ENCODE measurements at regions of chr13 and their contacts with region 1.

Region 1: GRCh38 chr13:46679369-46680120 is 117.4 kb downstream of the ESD start:
- DNase-seq: peak; percentile 75 to 95 (median 92)
- H3K4me3 ChIP-seq: peak overlapping the region in 6 of 7 experiments; percentile 25 to 75 (median 48)
- H3K27ac ChIP-seq: peak overlapping the region; percentile 28 to 75
- H3K4me1 ChIP-seq: peaks cover 22 to 40% (median 29%) of the 10 kb centered on the region in 4 experiments
- H3K27me3 ChIP-seq: no peaks in the 10 kb centered on the region

Region 2: DNA sequence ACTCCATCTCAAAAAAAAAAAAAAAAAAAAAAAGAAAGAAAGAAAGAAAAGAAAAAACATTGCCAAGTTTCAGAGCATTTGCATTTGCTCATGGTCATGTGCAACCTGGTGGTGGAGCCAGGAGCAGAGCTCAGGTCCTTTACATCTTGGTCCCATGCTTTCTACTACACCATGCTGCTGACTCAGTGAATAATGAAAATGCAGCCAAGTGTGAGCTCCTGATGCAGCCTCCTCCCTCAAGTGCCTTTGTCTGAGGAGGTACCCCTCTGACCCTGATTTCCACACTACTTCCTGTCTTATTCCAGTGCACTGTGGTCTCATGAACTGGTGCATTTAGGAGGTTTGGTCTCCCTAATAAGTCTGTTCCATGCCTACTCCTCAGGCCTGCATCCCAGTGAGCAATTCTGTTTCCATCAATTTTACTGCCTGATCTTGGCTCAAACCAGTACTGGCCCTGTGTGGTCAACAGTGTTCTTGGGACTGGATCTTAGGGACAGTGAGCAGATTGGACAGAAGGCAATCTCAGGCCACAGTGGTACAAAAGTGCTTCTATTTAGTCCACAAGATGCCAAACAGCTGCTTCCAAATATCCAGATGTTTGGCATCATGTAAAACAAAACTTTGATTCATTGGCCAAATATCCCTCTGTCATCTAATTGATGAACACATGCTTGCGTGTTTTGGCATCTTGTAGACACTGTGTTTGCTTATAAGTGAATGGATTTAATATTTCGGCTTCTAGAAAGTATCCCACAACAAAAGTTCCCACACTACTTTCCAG is 155.4 kb before region 1 on chr13:
- CTCF ChIA-PET with region 1: no interaction called
- POLR2A ChIA-PET with region 1: no interaction called
- DNase-seq: no peak
- H3K4me3 ChIP-seq: no peak overlapping the region
- H3K27ac ChIP-seq: no peak overlapping the region
- H3K4me1 ChIP-seq: peaks cover 2 to 10% (median 7%) of the 10 kb centered on the region in 4 experiments
- H3K27me3 ChIP-seq: no peaks in the 10 kb centered on the region

Region 3: DNA sequence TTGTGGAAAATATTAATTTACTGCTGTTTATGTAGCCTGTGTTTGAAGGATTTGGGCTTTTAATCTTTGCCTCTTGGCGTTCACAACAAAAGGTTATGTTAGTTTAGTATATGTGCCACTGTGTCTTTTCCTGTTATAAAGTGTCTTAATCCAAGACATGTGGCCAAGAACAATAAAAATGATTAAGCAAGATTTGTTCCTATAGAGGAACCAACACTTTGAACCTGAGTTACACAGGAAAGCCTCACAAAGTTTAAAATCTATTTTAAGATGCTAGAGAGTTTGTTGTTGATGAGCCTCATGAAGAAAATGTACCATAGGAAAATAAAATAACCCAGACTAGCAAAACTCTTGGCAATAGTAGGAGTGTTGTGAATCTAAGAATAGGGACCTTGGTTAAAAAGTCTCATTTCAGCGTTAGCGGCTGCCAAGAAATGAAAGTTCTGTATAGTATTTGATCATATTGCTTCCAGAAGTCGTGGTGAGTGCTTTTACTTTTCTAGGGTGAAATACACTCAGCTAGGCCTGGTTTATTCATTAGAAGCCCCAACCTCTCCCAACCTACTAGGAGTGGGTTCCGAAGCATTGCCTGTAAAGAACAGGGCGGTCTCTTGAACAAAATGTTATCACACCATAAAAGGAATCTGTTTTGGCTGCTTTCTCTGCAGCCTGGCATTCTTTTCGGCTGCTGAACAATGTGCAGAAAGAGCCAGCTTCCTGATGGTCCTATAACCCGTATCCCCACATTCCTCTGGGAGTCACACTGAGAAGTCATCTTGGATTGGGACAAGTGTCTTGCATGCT is 24.0 kb before region 1 on chr13:
- CTCF ChIA-PET with region 1: no interaction called
- POLR2A ChIA-PET with region 1: no interaction called
- DNase-seq: peak in 1 of 3 donors; percentile 60
- H3K4me3 ChIP-seq: peak overlapping the region in 4 of 7 experiments; percentile 31 to 63 (median 50)
- H3K27ac ChIP-seq: peak overlapping the region; percentile 48 to 83
- H3K4me1 ChIP-seq: peaks cover 0 to 34% (median 20%) of the 10 kb centered on the region in 4 experiments
- H3K27me3 ChIP-seq: no peaks in the 10 kb centered on the region

Region 4: DNA sequence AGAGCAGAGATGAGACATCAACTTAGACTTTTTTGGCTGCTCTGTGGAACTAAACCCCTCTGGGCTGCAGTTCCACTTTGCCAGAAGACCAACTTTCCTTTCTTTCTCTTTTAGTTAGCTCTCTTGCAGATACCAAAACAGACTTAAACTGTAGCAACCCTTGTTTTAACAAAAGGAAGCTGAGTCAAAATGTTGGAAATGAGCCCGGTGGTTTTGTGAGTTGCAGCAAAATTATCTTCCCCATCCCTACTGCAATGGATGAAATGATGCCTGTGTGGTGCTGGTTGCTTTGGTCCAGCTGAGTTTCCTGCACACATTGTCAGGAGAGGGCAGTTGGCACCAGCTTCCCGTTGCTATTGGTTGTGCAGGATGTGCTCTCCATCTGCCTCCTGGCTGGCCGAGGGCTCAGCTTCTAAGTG is 11.2 kb before region 1 on chr13:
- CTCF ChIA-PET with region 1: interaction called, 17 read pairs
- POLR2A ChIA-PET with region 1: no interaction called
- DNase-seq: peak; percentile 77 to 96 (median 95)
- H3K4me3 ChIP-seq: peak overlapping the region in 6 of 7 experiments; percentile 42 to 78 (median 60)
- H3K27ac ChIP-seq: peak overlapping the region; percentile 67 to 76
- H3K4me1 ChIP-seq: peaks cover 13 to 62% (median 40%) of the 10 kb centered on the region in 4 experiments
- H3K27me3 ChIP-seq: no peaks in the 10 kb centered on the region

Region 5: GRCh38 chr13:46796515-46797474 is 117.2 kb after region 1 on chr13 and contains the start of gene ESD:
- CTCF ChIA-PET with region 1: no interaction called
- POLR2A ChIA-PET with region 1: no interaction called
- DNase-seq: peak; percentile 89 to 94 (median 93)
- H3K4me3 ChIP-seq: peak within 1 kb of the TSS; percentile 77 to 98 (median 86)
- H3K27ac ChIP-seq: peak within 1 kb of the TSS; percentile 64 to 87
- H3K4me1 ChIP-seq: peaks cover 9 to 26% (median 18%) of the 10 kb centered on the region in 4 experiments
- H3K27me3 ChIP-seq: no peaks in the 10 kb centered on the region

Region 6: DNA sequence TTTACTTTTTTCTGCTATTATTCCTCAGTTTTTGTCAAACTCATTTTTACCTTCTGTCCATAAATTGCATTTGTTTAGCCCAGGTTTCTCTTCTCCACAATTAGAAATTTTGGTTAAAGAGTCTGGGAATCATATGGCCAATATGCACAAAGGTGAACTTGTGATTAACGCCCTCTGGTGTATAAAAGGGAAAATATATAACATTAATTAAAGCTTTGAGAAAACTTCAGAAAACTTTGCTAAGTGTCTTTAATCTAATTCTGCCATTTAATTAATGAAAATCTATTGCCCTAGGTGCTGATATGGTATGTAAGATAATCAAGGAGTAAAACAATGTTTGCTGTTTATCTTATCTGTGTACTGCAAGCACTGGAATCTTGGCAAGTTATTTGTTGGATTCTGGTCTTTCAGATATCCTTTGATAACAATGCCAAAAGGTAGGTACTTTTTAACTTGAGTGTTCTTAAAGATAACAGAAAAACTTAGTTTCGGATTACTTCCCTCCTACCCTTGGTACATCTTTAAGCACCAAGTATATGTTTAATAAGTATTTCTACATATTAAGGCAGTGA is 918.9 kb after region 1 on chr13:
- CTCF ChIA-PET with region 1: no interaction called
- POLR2A ChIA-PET with region 1: no interaction called
- DNase-seq: peak; percentile 4 to 21 (median 16)
- H3K4me3 ChIP-seq: no peak overlapping the region
- H3K27ac ChIP-seq: no peak overlapping the region
- H3K4me1 ChIP-seq: no peaks in the 10 kb centered on the region
- H3K27me3 ChIP-seq: no peaks in the 10 kb centered on the region